Naive thymus-derived CD4-positive, alpha-beta T cell (primary cell): ENCODE measurements at regions of chr2 and their contacts with region 1.

Region 1: GRCh38 chr2:191637182-191638078 is 40.5 kb upstream of the NABP1 start:
- DNase-seq: peak in 7 of 9 donors; percentile 17 to 39 (median 31)
- ATAC-seq: peak; percentile 94
- H3K4me3 ChIP-seq: no peak overlapping the region
- H3K4me3 Mint-ChIP-seq: peak overlapping the region; percentile 29 to 78 (median 68)
- H3K27ac ChIP-seq: peak overlapping the region; percentile 43
- H3K27ac Mint-ChIP-seq: peak overlapping the region; percentile 44 to 96 (median 80)
- H3K4me1 ChIP-seq: peaks cover 25 to 26% of the 10 kb centered on the region in 2 donors
- H3K4me1 Mint-ChIP-seq: peaks cover 38 to 60% (median 45%) of the 10 kb centered on the region in 7 donors
- H3K27me3 ChIP-seq: no peaks in the 10 kb centered on the region
- H3K27me3 Mint-ChIP-seq: peaks cover 0 to 5% (median 0%) of the 10 kb centered on the region in 5 donors

Region 2: GRCh38 chr2:191202881-191203397 is 434.5 kb before region 1 on chr2:
- CTCF ChIA-PET with region 1: no interaction called
- POLR2A ChIA-PET with region 1: no interaction called
- intact Hi-C with region 1: loop called in 1 of 2 experiments (anchors 5 kb)
- DNase-seq: no peak
- ATAC-seq: no peak
- H3K4me3 ChIP-seq: no peak overlapping the region
- H3K4me3 Mint-ChIP-seq: peak overlapping the region in 7 of 10 donors; percentile 6 to 62 (median 13)
- H3K27ac ChIP-seq: no peak overlapping the region
- H3K27ac Mint-ChIP-seq: peak overlapping the region in 5 of 9 donors; percentile 13 to 79 (median 37)
- H3K4me1 ChIP-seq: peaks cover 22 to 33% of the 10 kb centered on the region in 2 donors
- H3K4me1 Mint-ChIP-seq: peaks cover 25 to 54% (median 44%) of the 10 kb centered on the region in 7 donors
- H3K27me3 ChIP-seq: no peaks in the 10 kb centered on the region
- H3K27me3 Mint-ChIP-seq: no peaks in the 10 kb centered on the region

Region 3: GRCh38 chr2:191566344-191566743 is 71.1 kb before region 1 on chr2:
- CTCF ChIA-PET with region 1: interaction called, 4 read pairs
- POLR2A ChIA-PET with region 1: no interaction called
- intact Hi-C with region 1: loop called in 1 of 2 experiments (anchors 1 kb)
- DNase-seq: peak; percentile 16 to 64 (median 42)
- ATAC-seq: peak; percentile 72
- H3K4me3 ChIP-seq: no peak overlapping the region
- H3K4me3 Mint-ChIP-seq: no peak overlapping the region
- H3K27ac ChIP-seq: no peak overlapping the region
- H3K27ac Mint-ChIP-seq: no peak overlapping the region
- H3K4me1 ChIP-seq: peaks cover 8 to 14% of the 10 kb centered on the region in 2 donors
- H3K4me1 Mint-ChIP-seq: peaks cover 14 to 34% (median 22%) of the 10 kb centered on the region in 7 donors
- H3K27me3 ChIP-seq: peaks cover 0 to 7% of the 10 kb centered on the region in 2 donors
- H3K27me3 Mint-ChIP-seq: peaks cover 4 to 69% (median 13%) of the 10 kb centered on the region in 5 donors

Region 4: GRCh38 chr2:191625016-191625415 is 12.4 kb before region 1 on chr2:
- CTCF ChIA-PET with region 1: interaction called, 4 read pairs
- POLR2A ChIA-PET with region 1: interaction called, 14 read pairs
- intact Hi-C with region 1: loop called (anchors 1 kb)
- DNase-seq: peak in 6 of 9 donors; percentile 26 to 68 (median 64)
- ATAC-seq: peak; percentile 90
- H3K4me3 ChIP-seq: no peak overlapping the region
- H3K4me3 Mint-ChIP-seq: peak overlapping the region in 7 of 10 donors; percentile 7 to 52 (median 42)
- H3K27ac ChIP-seq: no peak overlapping the region
- H3K27ac Mint-ChIP-seq: peak overlapping the region in 8 of 9 donors; percentile 65 to 90 (median 82)
- H3K4me1 ChIP-seq: peaks cover 18 to 25% of the 10 kb centered on the region in 2 donors
- H3K4me1 Mint-ChIP-seq: peaks cover 32 to 77% (median 59%) of the 10 kb centered on the region in 7 donors
- H3K27me3 ChIP-seq: no peaks in the 10 kb centered on the region
- H3K27me3 Mint-ChIP-seq: peaks cover 0 to 2% (median 0%) of the 10 kb centered on the region in 5 donors

Region 5: DNA sequence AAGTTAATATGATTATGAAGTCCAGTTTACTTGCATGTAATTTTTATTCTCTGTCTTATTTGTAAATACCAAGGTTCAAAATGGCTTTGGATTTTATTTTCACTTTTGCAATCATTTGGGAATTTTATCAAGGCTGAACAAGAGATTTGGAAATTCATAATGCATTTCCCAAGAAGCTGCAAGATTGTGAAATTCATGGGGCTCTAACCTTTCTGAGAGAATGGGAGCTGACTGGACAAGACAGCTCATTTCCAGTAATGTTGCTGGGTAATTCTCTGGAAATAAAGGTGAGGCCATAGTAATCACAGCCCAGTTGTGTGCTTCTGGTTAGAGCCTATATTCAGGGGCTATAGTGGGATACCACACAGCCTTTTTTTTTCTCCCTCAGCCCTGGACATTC is 19.0 kb after region 1 on chr2:
- CTCF ChIA-PET with region 1: no interaction called
- POLR2A ChIA-PET with region 1: no interaction called
- intact Hi-C with region 1: loop called in 1 of 2 experiments (anchors 2 kb)
- DNase-seq: no peak
- ATAC-seq: no peak
- H3K4me3 ChIP-seq: no peak overlapping the region
- H3K4me3 Mint-ChIP-seq: no peak overlapping the region
- H3K27ac ChIP-seq: no peak overlapping the region
- H3K27ac Mint-ChIP-seq: no peak overlapping the region
- H3K4me1 ChIP-seq: no peaks in the 10 kb centered on the region
- H3K4me1 Mint-ChIP-seq: peaks cover 0 to 5% (median 0%) of the 10 kb centered on the region in 7 donors
- H3K27me3 ChIP-seq: no peaks in the 10 kb centered on the region
- H3K27me3 Mint-ChIP-seq: peaks cover 0 to 2% (median 0%) of the 10 kb centered on the region in 5 donors

Region 6: DNA sequence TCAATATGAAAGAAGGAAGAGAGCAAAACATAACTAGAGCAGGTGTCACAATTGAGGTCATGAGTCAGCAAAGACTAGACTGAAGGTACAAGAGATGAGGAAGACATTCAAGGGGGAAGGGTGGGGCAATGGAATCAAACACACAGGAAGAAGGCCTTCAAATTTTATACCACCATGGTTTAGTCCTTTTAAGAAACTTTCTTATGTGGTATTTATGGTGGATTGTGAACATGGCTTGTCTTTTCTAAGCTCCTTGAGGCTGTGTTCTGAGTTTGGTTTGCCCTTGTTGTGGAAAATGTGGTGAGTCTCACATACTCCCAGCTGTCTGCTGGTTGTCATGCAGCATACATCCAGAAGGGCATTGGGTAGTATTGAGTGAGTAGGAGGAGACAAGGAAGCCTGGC is 102.6 kb after region 1 on chr2:
- CTCF ChIA-PET with region 1: no interaction called
- POLR2A ChIA-PET with region 1: no interaction called
- intact Hi-C with region 1: loop called in 1 of 2 experiments (anchors 1 kb)
- DNase-seq: peak in 8 of 9 donors; percentile 42 to 83 (median 78)
- ATAC-seq: peak; percentile 95
- H3K4me3 ChIP-seq: no peak overlapping the region
- H3K4me3 Mint-ChIP-seq: peak overlapping the region; percentile 0 to 62 (median 21)
- H3K27ac ChIP-seq: no peak overlapping the region
- H3K27ac Mint-ChIP-seq: peak overlapping the region; percentile 0 to 89 (median 44)
- H3K4me1 ChIP-seq: peaks cover 14% of the 10 kb centered on the region in 2 donors
- H3K4me1 Mint-ChIP-seq: peaks cover 13 to 18% (median 13%) of the 10 kb centered on the region in 7 donors
- H3K27me3 ChIP-seq: no peaks in the 10 kb centered on the region
- H3K27me3 Mint-ChIP-seq: peaks cover 10 to 45% (median 21%) of the 10 kb centered on the region in 5 donors

Region 7: DNA sequence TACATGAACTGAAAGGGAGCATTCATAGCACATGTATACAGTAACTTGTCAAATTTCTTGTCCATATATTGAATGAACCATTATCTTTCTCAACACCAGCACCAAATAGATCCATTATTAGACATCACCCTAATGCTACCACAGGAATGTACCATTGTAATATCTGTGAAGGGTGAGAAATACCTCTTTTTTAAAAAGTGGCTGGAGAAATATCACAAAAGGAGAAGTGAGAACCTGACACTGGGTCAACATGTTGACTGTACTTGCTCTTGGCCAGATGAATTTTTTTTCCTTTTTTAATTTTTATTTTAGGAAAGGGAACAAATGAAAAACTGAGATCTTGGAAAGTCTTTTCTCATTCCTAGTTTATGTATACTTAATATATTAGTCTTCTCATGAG is 146.0 kb after region 1 on chr2:
- CTCF ChIA-PET with region 1: no interaction called
- POLR2A ChIA-PET with region 1: no interaction called
- intact Hi-C with region 1: no loop called
- DNase-seq: no peak
- ATAC-seq: no peak
- H3K4me3 ChIP-seq: no peak overlapping the region
- H3K4me3 Mint-ChIP-seq: no peak overlapping the region
- H3K27ac ChIP-seq: no peak overlapping the region
- H3K27ac Mint-ChIP-seq: no peak overlapping the region
- H3K4me1 ChIP-seq: no peaks in the 10 kb centered on the region
- H3K4me1 Mint-ChIP-seq: peaks cover 0 to 16% (median 8%) of the 10 kb centered on the region in 7 donors
- H3K27me3 ChIP-seq: no peaks in the 10 kb centered on the region
- H3K27me3 Mint-ChIP-seq: peaks cover 8 to 23% (median 15%) of the 10 kb centered on the region in 5 donors